Activated B cell treated with CpG ODN at 0.5 μM for 24 hours (primary cell): ENCODE measurements at regions of chr12 and their contacts with region 1.

Region 1: DNA sequence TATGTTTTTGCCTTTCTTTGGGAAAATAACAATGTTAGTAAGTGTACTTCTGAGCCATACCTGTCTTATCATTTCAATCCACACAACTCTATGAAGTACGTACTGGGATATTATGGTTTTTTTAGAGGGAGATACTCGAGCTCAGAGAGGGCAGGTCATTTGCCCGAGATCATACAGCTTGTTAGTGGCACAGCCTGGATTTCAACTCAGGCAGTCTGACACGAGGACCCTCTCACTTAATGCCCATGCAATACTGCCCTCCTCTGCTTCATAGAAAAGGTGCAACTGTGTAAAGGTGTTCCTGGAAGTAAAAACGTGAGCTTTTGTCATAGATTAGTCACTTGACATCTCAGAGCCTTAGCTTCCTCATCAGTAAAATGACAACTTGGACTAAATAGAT is 128.0 kb downstream of the NDUFA12 start:
- DNase-seq: no peak
- ATAC-seq: peak; percentile 74
- H3K4me3 Mint-ChIP-seq: peak overlapping the region; percentile 74
- H3K27ac Mint-ChIP-seq: peak overlapping the region; percentile 46
- H3K4me1 Mint-ChIP-seq: peaks cover 38% of the 10 kb centered on the region
- H3K27me3 Mint-ChIP-seq: peaks cover 37% of the 10 kb centered on the region
- CTCF ChIP-seq: no peak

Region 2: DNA sequence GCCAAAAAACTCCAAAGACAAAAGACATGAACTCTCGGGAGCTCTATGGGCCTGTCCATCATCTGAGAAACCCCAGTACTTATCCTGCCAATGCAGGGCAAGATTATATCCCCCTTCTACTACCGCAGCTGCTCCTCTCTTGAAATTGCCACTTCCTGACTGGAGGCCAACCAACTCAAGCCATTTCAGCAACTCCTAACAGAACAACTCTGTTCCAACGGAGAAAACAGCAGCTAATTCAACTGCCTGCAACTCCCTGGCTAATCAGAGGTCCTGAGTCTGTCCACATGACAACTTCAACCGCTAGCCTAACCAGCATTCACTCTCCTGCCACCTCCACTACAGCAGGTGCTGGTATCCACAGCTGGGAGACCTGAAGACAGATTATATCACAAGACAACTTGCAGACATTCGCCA is 440.0 kb before region 1 on chr12:
- CTCF ChIA-PET with region 1: interaction called, 4 read pairs
- POLR2A ChIA-PET with region 1: no interaction called
- intact Hi-C with region 1: loop called (anchors 1 kb)
- DNase-seq: no peak
- ATAC-seq: no peak
- H3K4me3 Mint-ChIP-seq: no peak overlapping the region
- H3K27ac Mint-ChIP-seq: no peak overlapping the region
- H3K4me1 Mint-ChIP-seq: peaks cover 12% of the 10 kb centered on the region
- H3K27me3 Mint-ChIP-seq: no peaks in the 10 kb centered on the region
- CTCF ChIP-seq: no peak

Region 3: GRCh38 chr12:94603434-94604365 is 271.8 kb before region 1 on chr12:
- CTCF ChIA-PET with region 1: interaction called, 16 read pairs
- POLR2A ChIA-PET with region 1: no interaction called
- intact Hi-C with region 1: loop called (anchors 1 kb)
- DNase-seq: peak; percentile 31
- ATAC-seq: peak; percentile 57
- H3K4me3 Mint-ChIP-seq: no peak overlapping the region
- H3K27ac Mint-ChIP-seq: no peak overlapping the region
- H3K4me1 Mint-ChIP-seq: no peaks in the 10 kb centered on the region
- H3K27me3 Mint-ChIP-seq: no peaks in the 10 kb centered on the region
- CTCF ChIP-seq: peak; percentile 24

Region 4: DNA sequence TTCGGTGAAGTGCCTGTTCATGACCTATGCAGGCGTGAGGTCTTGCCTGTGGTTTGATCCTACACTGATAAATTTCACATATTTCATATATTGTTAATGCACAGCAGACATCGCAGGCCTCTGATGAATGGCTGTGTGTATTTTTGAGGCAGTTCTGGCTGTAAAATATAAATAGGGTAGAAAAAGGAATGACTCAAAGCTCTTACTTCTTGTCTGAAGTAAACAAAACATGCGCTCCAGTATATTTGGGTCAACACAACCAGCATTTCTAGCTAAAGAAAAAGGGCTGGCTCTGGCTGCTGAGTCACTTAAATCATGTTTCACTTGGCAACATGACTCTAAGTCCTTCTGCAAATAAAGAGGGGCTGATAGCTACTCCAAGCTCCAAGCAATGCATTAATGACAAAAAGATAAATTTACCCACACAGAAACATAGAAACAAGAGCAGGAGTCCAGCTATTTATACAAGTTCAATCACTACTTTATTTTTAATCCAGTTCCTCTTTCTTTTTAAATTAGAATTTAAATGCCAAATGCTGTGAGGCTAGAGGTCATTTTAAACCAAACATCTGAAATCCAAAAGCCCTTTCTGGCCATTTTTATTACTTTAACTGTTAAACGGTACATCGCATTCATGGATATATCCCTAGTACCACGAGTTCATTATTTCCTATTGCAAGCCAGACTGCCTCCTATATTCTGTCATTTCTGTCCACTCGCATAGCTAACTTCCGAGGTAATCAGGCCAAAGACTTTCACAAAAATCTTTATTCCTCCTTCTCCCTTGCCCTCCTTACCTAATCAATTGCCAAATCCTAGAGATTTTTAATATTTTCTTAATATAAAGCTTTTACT is 170.8 kb before region 1 on chr12:
- CTCF ChIA-PET with region 1: interaction called, 58 read pairs
- POLR2A ChIA-PET with region 1: interaction called, 3 read pairs
- intact Hi-C with region 1: no loop called
- DNase-seq: no peak
- ATAC-seq: no peak
- H3K4me3 Mint-ChIP-seq: no peak overlapping the region
- H3K27ac Mint-ChIP-seq: no peak overlapping the region
- H3K4me1 Mint-ChIP-seq: peaks cover 73% of the 10 kb centered on the region
- H3K27me3 Mint-ChIP-seq: no peaks in the 10 kb centered on the region
- CTCF ChIP-seq: no peak

Region 5: GRCh38 chr12:94725375-94726168 is 150.0 kb before region 1 on chr12:
- CTCF ChIA-PET with region 1: interaction called, 17 read pairs
- POLR2A ChIA-PET with region 1: interaction called, 5 read pairs
- intact Hi-C with region 1: no loop called
- DNase-seq: no peak
- ATAC-seq: no peak
- H3K4me3 Mint-ChIP-seq: no peak overlapping the region
- H3K27ac Mint-ChIP-seq: peak overlapping the region; percentile 15
- H3K4me1 Mint-ChIP-seq: peaks cover 53% of the 10 kb centered on the region
- H3K27me3 Mint-ChIP-seq: no peaks in the 10 kb centered on the region
- CTCF ChIP-seq: no peak

Region 6: DNA sequence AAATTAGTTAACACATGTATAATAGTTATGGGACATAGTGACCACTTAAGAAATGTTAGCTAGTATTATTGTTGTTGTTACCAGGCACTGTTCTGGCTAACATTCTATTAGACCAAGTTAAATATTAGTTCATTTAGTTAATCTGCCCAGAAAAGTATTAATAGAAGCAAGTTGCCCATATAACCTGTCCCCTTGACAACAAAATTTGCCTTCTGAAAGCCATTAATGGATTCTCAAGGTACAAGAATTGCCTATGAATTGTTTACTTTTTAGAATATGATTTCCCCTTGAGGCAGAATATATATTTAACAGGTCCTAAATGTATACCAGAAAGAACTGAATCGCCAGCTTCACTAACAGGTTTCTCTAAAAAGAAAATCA is 57.8 kb before region 1 on chr12:
- CTCF ChIA-PET with region 1: interaction called, 62 read pairs
- POLR2A ChIA-PET with region 1: interaction called, 44 read pairs
- intact Hi-C with region 1: loop called (anchors 1 kb)
- DNase-seq: no peak
- ATAC-seq: no peak
- H3K4me3 Mint-ChIP-seq: peak overlapping the region; percentile 87
- H3K27ac Mint-ChIP-seq: peak overlapping the region; percentile 97
- H3K4me1 Mint-ChIP-seq: peaks cover 71% of the 10 kb centered on the region
- H3K27me3 Mint-ChIP-seq: no peaks in the 10 kb centered on the region
- CTCF ChIP-seq: no peak

Region 7: GRCh38 chr12:94962670-94963069 is 87.1 kb after region 1 on chr12:
- CTCF ChIA-PET with region 1: no interaction called
- POLR2A ChIA-PET with region 1: no interaction called
- intact Hi-C with region 1: no loop called
- DNase-seq: no peak
- ATAC-seq: no peak
- H3K4me3 Mint-ChIP-seq: no peak overlapping the region
- H3K27ac Mint-ChIP-seq: no peak overlapping the region
- H3K4me1 Mint-ChIP-seq: peaks cover 11% of the 10 kb centered on the region
- H3K27me3 Mint-ChIP-seq: no peaks in the 10 kb centered on the region
- CTCF ChIP-seq: no peak

Region 8: GRCh38 chr12:95037906-95038305 is 162.4 kb after region 1 on chr12:
- CTCF ChIA-PET with region 1: no interaction called
- POLR2A ChIA-PET with region 1: no interaction called
- intact Hi-C with region 1: no loop called
- DNase-seq: no peak
- ATAC-seq: no peak
- H3K4me3 Mint-ChIP-seq: no peak overlapping the region
- H3K27ac Mint-ChIP-seq: no peak overlapping the region
- H3K4me1 Mint-ChIP-seq: peaks cover 2% of the 10 kb centered on the region
- H3K27me3 Mint-ChIP-seq: no peaks in the 10 kb centered on the region
- CTCF ChIP-seq: no peak

Region 9: GRCh38 chr12:95277139-95277538 is 401.6 kb after region 1 on chr12:
- CTCF ChIA-PET with region 1: no interaction called
- POLR2A ChIA-PET with region 1: no interaction called
- intact Hi-C with region 1: no loop called
- DNase-seq: no peak
- ATAC-seq: no peak
- H3K4me3 Mint-ChIP-seq: no peak overlapping the region
- H3K27ac Mint-ChIP-seq: no peak overlapping the region
- H3K4me1 Mint-ChIP-seq: no peaks in the 10 kb centered on the region
- H3K27me3 Mint-ChIP-seq: no peaks in the 10 kb centered on the region
- CTCF ChIP-seq: no peak

Region 10: GRCh38 chr12:95532851-95533250 is 657.3 kb after region 1 on chr12:
- CTCF ChIA-PET with region 1: interaction called, 3 read pairs
- POLR2A ChIA-PET with region 1: no interaction called
- intact Hi-C with region 1: loop called (anchors 5 kb)
- DNase-seq: no peak
- ATAC-seq: no peak
- H3K4me3 Mint-ChIP-seq: no peak overlapping the region
- H3K27ac Mint-ChIP-seq: no peak overlapping the region
- H3K4me1 Mint-ChIP-seq: no peaks in the 10 kb centered on the region
- H3K27me3 Mint-ChIP-seq: no peaks in the 10 kb centered on the region
- CTCF ChIP-seq: no peak